ENCODE measurements at regions of chr17 and their contacts with region 1.

Region 1: GRCh38 chr17:32444308-32445073 is at the start of gene PSMD11:
- DNase-seq: peak; percentile 100
- H3K4me3 Mint-ChIP-seq: peak within 1 kb of the TSS; percentile 88
- H3K27ac Mint-ChIP-seq: peak within 1 kb of the TSS; percentile 86
- H3K4me1 Mint-ChIP-seq: peaks cover 28% of the 10 kb centered on the region
- H3K27me3 Mint-ChIP-seq: peaks cover 13% of the 10 kb centered on the region
- total RNA-seq, gene PSMD11: 217 and 222 TPM in 2 replicates

Region 2: GRCh38 chr17:31907342-31907962 is 537.0 kb before region 1 on chr17:
- intact Hi-C with region 1: loop called (anchors 10 kb)
- DNase-seq: no peak
- H3K4me3 Mint-ChIP-seq: no peak overlapping the region
- H3K27ac Mint-ChIP-seq: no peak overlapping the region
- H3K4me1 Mint-ChIP-seq: peaks cover 7% of the 10 kb centered on the region
- H3K27me3 Mint-ChIP-seq: peaks cover 16% of the 10 kb centered on the region

Region 3: DNA sequence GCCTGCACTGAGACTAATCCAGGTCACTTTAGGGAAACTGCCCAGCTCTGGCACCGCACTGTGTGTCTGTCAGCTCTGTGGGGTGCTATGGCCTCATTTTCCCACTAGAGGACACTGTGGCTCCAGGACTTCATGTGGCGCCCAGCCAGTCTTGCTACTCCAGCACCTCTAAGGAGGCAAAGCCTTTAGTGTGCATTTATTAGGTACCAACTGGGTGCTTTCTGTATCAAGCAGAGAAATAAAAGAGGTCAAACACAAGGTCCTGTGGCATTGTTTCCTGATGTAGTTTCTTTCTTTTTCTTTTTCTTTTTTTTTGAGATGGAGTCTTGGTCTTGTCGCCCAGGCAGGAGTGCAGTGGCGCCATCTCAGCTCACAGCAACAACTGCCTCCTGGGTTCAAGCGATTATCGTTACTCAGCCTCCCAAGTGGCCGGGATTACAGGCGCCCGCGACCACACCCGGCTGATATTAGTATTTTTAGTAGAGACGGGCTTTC is 191.3 kb before region 1 on chr17:
- intact Hi-C with region 1: loop called (anchors 1 kb)
- DNase-seq: peak; percentile 94
- H3K4me3 Mint-ChIP-seq: no peak overlapping the region
- H3K27ac Mint-ChIP-seq: no peak overlapping the region
- H3K4me1 Mint-ChIP-seq: no peaks in the 10 kb centered on the region
- H3K27me3 Mint-ChIP-seq: peaks cover 21% of the 10 kb centered on the region

Region 4: GRCh38 chr17:32349854-32350665 is 94.4 kb before region 1 on chr17 and contains the start of gene ZNF207:
- intact Hi-C with region 1: loop called (anchors 1 kb)
- DNase-seq: peak; percentile 99
- H3K4me3 Mint-ChIP-seq: peak within 1 kb of the TSS; percentile 97
- H3K27ac Mint-ChIP-seq: peak within 1 kb of the TSS; percentile 99
- H3K4me1 Mint-ChIP-seq: peaks cover 20% of the 10 kb centered on the region
- H3K27me3 Mint-ChIP-seq: no peaks in the 10 kb centered on the region
- total RNA-seq, gene ZNF207: 269 and 272 TPM in 2 replicates

Region 5: DNA sequence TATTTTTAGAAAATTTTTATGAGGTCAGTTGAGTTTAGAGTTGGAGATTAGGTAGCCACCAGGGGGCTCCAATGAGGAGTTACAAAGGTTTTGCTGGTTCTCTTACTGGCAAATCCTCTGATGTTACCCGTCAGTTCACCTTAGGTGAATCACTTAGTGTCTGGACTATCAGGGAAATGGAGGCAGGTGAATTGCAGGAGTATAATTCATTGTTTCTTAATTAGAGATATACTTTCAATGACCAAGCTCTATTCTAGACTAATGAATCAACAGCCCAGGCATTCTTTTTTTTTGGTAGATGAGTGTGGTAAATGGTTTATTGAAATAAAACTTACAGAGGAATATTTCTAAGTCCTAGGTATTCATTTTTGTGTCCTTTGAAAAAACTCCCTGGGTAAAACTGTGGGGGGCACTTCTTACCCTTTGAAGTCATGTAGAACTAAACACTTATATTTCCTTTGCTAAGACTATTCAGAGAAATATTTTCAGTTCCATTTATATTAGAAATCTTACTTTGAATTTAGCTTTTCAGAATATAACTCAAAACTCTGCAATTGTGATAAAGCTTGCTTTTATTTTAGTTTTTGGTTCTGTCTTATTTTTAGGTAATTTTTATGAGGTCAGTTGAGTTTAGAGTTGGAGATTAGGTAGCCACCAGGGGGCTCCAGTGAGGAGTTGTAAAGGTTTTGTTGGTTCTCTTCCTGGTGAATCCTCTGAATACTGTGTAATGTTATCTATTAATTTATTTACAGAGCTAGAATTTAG is 17.5 kb after region 1 on chr17:
- intact Hi-C with region 1: loop called (anchors 1 kb)
- DNase-seq: peak; percentile 88
- H3K4me3 Mint-ChIP-seq: no peak overlapping the region
- H3K27ac Mint-ChIP-seq: no peak overlapping the region
- H3K4me1 Mint-ChIP-seq: peaks cover 29% of the 10 kb centered on the region
- H3K27me3 Mint-ChIP-seq: no peaks in the 10 kb centered on the region

Region 6: GRCh38 chr17:32486111-32486700 is 41.7 kb after region 1 on chr17:
- intact Hi-C with region 1: loop called (anchors 2 kb)
- DNase-seq: peak; percentile 92
- H3K4me3 Mint-ChIP-seq: peak overlapping the region; percentile 66
- H3K27ac Mint-ChIP-seq: peak overlapping the region; percentile 40
- H3K4me1 Mint-ChIP-seq: peaks cover 27% of the 10 kb centered on the region
- H3K27me3 Mint-ChIP-seq: no peaks in the 10 kb centered on the region